Tibial artery (tissue), 4 donors: ENCODE measurements at regions of chr20 and their contacts with region 1.

Region 1: GRCh38 chr20:1802385-1803060 is 92.7 kb upstream of the SIRPA start:
- DNase-seq: peak; percentile 64 to 73
- H3K4me3 ChIP-seq: peak overlapping the region; percentile 56 to 61
- H3K27ac ChIP-seq: peak overlapping the region in 1 of 2 donors; percentile 50
- H3K4me1 ChIP-seq: peaks cover 0 to 22% (median 17%) of the 10 kb centered on the region in 4 donors
- H3K27me3 ChIP-seq: no peaks in the 10 kb centered on the region
- CTCF ChIP-seq: peak; percentile 73 to 75

Region 2: GRCh38 chr20:1894951-1895673 is 92.6 kb after region 1 on chr20 and contains the start of gene SIRPA:
- intact Hi-C with region 1: loop called (anchors 5 kb)
- DNase-seq: peak; percentile 64 to 87
- H3K4me3 ChIP-seq: peak within 1 kb of the TSS; percentile 57 to 72
- H3K27ac ChIP-seq: peak within 1 kb of the TSS; percentile 88 to 97
- H3K4me1 ChIP-seq: peaks cover 0 to 74% (median 55%) of the 10 kb centered on the region in 4 donors
- H3K27me3 ChIP-seq: no peaks in the 10 kb centered on the region
- CTCF ChIP-seq: no peak

Region 3: DNA sequence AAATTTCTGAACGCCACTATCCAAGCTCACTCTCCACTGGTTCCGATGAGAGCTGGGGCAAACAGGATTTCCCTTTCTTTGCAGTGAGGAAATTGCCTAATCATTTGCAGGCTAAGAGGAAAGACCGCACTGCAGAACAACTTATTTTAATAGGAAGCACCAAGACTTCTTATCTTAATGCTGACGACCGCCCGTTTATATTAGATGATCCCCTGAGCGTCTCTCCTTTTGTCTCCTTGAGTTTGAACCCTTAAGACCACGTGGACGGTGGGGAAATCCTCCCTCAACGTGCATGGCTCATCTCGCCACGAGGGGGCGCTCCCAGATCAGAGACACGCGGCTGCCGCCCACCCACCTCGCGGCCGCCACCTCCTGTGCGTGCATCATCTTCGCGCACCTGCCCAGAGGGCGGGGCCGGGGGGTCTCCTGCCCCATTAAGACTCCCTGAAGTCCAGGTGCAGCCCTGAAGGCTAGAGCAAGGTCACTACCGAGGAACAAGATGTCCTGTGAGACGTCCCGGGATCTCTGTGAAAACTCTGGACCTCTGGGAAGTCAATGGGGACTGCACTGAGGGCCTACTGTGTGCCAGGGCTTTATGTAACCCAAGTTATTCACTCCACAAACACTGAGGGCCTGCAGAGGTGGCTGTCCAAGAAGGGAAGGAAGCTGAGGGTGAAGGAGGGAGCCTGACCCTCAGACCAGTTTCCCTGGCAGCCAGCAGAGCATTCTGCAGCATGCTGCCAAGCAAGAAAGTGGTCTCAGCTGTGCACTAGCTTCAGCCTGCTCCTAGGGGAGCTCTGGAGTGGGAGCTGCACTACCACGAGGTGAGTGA is 163.2 kb after region 1 on chr20:
- intact Hi-C with region 1: loop called (anchors 10 kb)
- DNase-seq: peak; percentile 71 to 82
- H3K4me3 ChIP-seq: no peak overlapping the region
- H3K27ac ChIP-seq: no peak overlapping the region
- H3K4me1 ChIP-seq: peaks cover 0 to 11% (median 3%) of the 10 kb centered on the region in 4 donors
- H3K27me3 ChIP-seq: peaks cover 0 to 40% of the 10 kb centered on the region in 2 donors
- CTCF ChIP-seq: peak; percentile 84 to 89

Region 4: GRCh38 chr20:2032155-2032554 is 229.6 kb after region 1 on chr20:
- intact Hi-C with region 1: no loop called
- DNase-seq: no peak
- H3K4me3 ChIP-seq: no peak overlapping the region
- H3K27ac ChIP-seq: no peak overlapping the region
- H3K4me1 ChIP-seq: peaks cover 0 to 3% (median 0%) of the 10 kb centered on the region in 4 donors
- H3K27me3 ChIP-seq: peaks cover 0 to 5% of the 10 kb centered on the region in 2 donors
- CTCF ChIP-seq: no peak

Region 5: GRCh38 chr20:2101865-2102584 is 299.5 kb after region 1 on chr20:
- intact Hi-C with region 1: loop called (anchors 5 kb)
- DNase-seq: peak; percentile 91 to 95
- H3K4me3 ChIP-seq: peak overlapping the region; percentile 84 to 98
- H3K27ac ChIP-seq: peak overlapping the region; percentile 98 to 99
- H3K4me1 ChIP-seq: peaks cover 0 to 39% (median 26%) of the 10 kb centered on the region in 4 donors
- H3K27me3 ChIP-seq: no peaks in the 10 kb centered on the region
- CTCF ChIP-seq: peak in 1 of 2 experiments; percentile 36

Region 6: GRCh38 chr20:2172305-2173175 is 370.0 kb after region 1 on chr20:
- intact Hi-C with region 1: loop called (anchors 5 kb)
- DNase-seq: peak; percentile 75 to 80
- H3K4me3 ChIP-seq: no peak overlapping the region
- H3K27ac ChIP-seq: no peak overlapping the region
- H3K4me1 ChIP-seq: no peaks in the 10 kb centered on the region
- H3K27me3 ChIP-seq: peaks cover 0 to 35% of the 10 kb centered on the region in 2 donors
- CTCF ChIP-seq: peak; percentile 86